Gastrocnemius medialis (tissue), 4 donors: ENCODE measurements at regions of chrX and their contacts with region 1.

Region 1: GRCh38 chrX:11143931-11144678 is 33.0 kb downstream of the HCCS start:
- DNase-seq: peak; percentile 5 to 22
- ATAC-seq: peak; percentile 58 to 89
- H3K4me3 ChIP-seq: no peak overlapping the region
- H3K27ac ChIP-seq: no peak overlapping the region
- H3K4me1 ChIP-seq: no peaks in the 10 kb centered on the region
- H3K27me3 ChIP-seq: no peaks in the 10 kb centered on the region
- CTCF ChIP-seq: peak; percentile 40 to 65 (median 59)
- POLR2A ChIP-seq: no peak

Region 2: DNA sequence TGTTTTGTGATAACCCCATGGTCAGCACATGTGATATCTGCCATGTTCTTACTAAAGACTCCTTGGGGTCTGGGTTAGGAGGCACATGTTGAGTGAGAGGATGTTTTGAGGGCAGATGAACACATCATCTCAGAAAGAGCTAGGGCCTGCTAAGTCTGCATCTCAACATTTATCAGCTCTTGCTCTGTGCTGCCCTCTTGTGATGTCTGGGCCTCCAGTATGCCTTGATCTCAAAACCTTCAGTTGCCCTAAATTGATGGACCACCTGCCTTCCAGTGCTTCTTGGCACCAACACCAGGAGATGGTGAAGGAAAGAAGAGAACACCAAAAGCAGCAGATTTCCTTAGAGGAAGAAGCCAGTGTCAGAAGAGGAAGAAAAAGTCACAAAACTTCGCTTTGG is 546.2 kb before region 1 on chrX:
- in situ Hi-C with region 1: no loop called
- intact Hi-C with region 1: no loop called
- DNase-seq: no peak
- ATAC-seq: no peak
- H3K4me3 ChIP-seq: no peak overlapping the region
- H3K27ac ChIP-seq: no peak overlapping the region
- H3K4me1 ChIP-seq: no peaks in the 10 kb centered on the region
- H3K27me3 ChIP-seq: no peaks in the 10 kb centered on the region
- CTCF ChIP-seq: peak in 2 of 5 experiments; percentile 13 to 38
- POLR2A ChIP-seq: no peak

Region 3: DNA sequence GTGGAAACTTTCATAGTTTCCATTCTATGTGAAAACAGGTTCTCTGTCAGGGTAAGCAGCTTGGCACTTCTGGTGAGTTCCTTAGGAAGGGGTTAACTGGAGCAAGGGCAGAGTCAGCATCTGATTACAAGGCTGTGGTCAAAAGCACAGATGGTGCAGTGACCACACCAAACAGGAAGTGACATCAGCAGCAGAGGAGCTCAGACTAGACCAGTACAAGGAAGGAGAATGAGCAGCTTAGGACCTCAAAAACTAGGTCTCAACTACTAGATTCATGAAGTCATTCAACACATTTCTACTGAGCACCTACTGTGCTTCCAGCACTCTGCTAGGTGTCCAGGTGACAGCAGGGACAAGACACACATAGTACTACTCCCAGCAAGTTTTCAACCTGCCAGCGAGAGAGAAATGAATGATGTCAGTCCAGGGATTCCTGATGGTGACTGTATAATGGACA is 279.3 kb after region 1 on chrX:
- in situ Hi-C with region 1: no loop called
- intact Hi-C with region 1: loop called (anchors 10 kb)
- DNase-seq: peak in 1 of 2 donors; percentile 15
- ATAC-seq: peak in 1 of 2 donors; percentile 25
- H3K4me3 ChIP-seq: no peak overlapping the region
- H3K27ac ChIP-seq: peak overlapping the region in 1 of 4 donors; percentile 12
- H3K4me1 ChIP-seq: peaks cover 0 to 3% of the 10 kb centered on the region in 2 donors
- H3K27me3 ChIP-seq: no peaks in the 10 kb centered on the region
- CTCF ChIP-seq: no peak
- POLR2A ChIP-seq: no peak

Region 4: DNA sequence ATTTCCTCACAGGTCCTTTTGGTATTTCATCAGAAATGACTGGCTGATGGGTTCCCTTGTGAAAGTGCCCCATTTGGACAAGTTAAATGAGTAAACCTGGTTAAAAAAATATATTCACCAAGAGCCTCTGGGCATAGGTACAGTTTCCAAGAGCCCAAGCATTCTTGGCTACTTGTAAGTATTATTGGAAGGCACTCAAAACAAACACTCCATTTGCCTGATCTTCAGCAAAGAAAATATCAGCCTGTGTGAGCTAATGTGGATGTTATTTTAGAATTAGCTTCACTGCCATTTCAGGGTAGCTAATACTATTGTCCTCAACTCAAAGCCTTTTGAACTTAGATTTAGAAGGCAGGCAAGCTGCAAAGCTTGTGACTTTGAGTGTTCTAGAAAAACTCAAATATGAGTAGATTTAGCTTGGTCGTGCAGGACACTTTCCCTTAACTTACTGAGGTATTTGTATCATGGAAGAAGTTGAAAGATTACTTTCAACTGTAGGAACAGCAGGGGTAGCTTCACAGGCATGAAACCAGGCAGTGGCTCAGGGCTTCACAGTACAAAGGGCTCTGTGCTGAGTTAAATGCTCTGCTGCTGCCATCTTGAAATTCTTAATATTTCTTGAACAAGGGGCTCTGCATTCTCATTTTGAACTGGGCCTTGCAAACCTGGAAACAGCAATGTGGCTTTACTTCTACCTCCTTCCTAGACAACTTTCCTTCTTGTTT is 326.3 kb after region 1 on chrX:
- in situ Hi-C with region 1: no loop called
- intact Hi-C with region 1: no loop called
- DNase-seq: no peak
- ATAC-seq: no peak
- H3K4me3 ChIP-seq: no peak overlapping the region
- H3K27ac ChIP-seq: peak overlapping the region in 1 of 4 donors; percentile 9
- H3K4me1 ChIP-seq: no peaks in the 10 kb centered on the region
- H3K27me3 ChIP-seq: no peaks in the 10 kb centered on the region
- CTCF ChIP-seq: no peak
- POLR2A ChIP-seq: no peak

Region 5: DNA sequence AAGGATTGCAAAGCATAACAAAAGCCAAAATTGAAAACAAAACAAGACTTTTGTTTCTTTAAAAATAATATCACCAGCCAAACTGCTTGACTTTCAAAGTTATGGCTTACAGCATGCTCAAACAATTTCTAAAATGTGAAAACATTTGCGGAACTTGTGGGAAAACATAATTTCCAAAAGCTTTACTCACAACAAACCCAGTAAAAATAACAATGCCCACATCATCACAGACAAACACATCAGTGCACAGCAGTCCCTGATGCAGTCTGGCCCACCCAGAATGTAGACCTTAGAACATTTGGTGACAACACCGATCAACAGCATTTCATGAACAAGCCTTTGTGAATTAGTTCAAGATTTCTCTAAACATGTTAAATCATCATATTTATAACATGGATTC is 422.7 kb after region 1 on chrX:
- in situ Hi-C with region 1: no loop called
- intact Hi-C with region 1: no loop called
- DNase-seq: no peak
- ATAC-seq: no peak
- H3K4me3 ChIP-seq: no peak overlapping the region
- H3K27ac ChIP-seq: no peak overlapping the region
- H3K4me1 ChIP-seq: peaks cover 3 to 11% of the 10 kb centered on the region in 2 donors
- H3K27me3 ChIP-seq: no peaks in the 10 kb centered on the region
- CTCF ChIP-seq: no peak
- POLR2A ChIP-seq: no peak

Region 6: DNA sequence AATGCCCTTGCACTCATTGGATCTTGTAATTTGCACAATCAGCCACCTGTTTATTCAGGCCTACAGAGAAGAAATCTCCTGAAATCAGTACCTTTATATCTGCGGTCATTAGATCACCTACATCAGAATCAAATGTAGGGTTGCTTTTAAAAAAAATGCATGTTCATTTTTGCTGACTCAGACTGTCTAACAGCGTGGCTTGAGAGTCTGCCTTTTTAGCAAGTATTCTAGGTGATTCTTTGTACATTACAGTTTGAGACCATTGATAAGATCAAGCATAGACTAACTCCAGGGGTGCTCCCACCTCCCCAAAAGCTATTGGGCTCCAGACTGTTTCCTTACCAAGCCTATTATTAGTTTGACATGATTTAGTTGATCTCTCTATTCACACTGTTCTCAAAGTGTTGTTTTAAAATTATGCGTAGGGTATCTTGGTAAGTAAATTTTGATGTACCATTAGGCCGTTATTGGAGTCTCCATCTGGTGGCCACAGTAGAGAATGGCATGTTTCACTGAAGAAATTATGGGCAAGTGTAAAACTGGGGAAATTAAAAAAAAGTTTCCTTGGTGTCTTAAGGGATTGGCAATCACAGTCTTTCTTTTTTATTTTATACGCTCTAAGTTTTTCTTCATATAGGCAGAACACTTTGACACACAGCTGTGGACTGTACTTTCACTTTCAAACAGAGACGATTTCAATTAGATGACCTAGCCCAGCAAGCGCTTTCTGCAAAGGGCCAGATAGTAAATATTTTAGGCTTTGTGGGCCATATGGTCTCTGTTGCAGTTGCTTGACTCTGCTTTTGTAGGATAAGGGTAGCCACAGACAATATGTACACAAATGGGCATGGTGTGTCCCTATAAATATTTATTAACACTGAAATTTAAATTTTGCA is 580.3 kb after region 1 on chrX:
- in situ Hi-C with region 1: loop called in 1 of 4 experiments (anchors 25 kb)
- intact Hi-C with region 1: loop called (anchors 5 kb)
- DNase-seq: no peak
- ATAC-seq: peak; percentile 47 to 56
- H3K4me3 ChIP-seq: peak overlapping the region in 1 of 4 donors; percentile 16
- H3K27ac ChIP-seq: no peak overlapping the region
- H3K4me1 ChIP-seq: peaks cover 0 to 3% of the 10 kb centered on the region in 2 donors
- H3K27me3 ChIP-seq: no peaks in the 10 kb centered on the region
- CTCF ChIP-seq: peak; percentile 61 to 67 (median 66)
- POLR2A ChIP-seq: no peak

Region 7: GRCh38 chrX:11770320-11770719 is 626.2 kb after region 1 on chrX:
- in situ Hi-C with region 1: loop called in 3 of 4 experiments (anchors 25 kb)
- intact Hi-C with region 1: loop called (anchors 5 kb)
- DNase-seq: peak in 1 of 2 donors; percentile 25
- ATAC-seq: peak in 1 of 2 donors; percentile 62
- H3K4me3 ChIP-seq: no peak overlapping the region
- H3K27ac ChIP-seq: no peak overlapping the region
- H3K4me1 ChIP-seq: no peaks in the 10 kb centered on the region
- H3K27me3 ChIP-seq: no peaks in the 10 kb centered on the region
- CTCF ChIP-seq: peak; percentile 54 to 82 (median 75)
- POLR2A ChIP-seq: no peak